Aorta (tissue), 5 donors: ENCODE measurements at regions of chr5 and their contacts with region 1.

Region 1: DNA sequence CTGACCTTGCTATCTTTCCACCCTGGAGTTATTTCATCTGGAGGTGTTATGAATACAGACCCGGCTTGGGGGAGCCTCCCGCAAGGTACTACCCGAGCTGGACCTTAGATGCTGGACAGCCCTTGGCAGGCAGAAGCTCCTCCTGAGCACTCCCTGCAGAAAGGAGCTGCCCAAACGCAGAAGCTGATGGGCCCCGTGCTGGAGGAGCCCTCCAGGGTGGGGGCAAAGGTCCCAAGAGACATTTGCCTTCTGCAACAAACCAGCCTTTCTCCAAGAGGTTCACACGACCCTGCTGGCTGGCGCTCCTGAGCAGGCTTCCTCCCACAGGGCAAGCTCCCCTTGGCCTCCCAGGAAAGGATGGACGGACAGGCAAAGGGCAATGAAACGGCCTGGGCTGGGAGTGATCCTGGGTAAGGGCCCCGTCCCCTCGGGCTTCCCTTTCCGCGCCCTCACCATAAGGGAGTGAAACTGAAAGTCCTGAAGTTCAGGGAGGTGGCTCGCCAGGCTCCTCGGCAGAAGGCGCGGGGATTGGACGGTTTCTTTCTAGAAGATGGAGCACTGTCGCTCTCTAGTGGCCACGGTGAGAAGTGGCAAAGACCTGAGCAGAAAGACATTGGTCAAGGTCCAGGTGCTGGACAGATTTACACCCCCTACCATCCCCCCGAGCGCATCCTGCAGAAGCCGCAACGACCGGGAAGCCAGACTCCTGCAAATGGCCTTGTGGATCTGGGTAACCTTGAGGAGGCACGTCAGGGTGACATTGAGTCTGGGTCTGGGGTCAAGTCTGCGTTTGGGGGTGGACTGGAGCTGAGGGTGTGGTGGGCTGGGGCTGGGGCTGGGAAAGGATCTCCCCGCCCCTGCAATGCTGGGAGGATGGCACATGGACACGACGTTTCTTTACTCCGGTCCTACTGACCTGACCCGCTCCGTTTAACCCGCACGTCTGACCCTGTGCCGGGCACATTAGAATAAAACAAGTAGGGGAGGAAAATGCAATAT is 56.4 kb downstream of the NEURL1B start:
- DNase-seq: peak; percentile 94
- ATAC-seq: peak; percentile 93
- H3K4me3 ChIP-seq: peak overlapping the region in 1 of 2 donors; percentile 56
- H3K27ac ChIP-seq: no peak overlapping the region
- H3K4me1 ChIP-seq: no peaks in the 10 kb centered on the region
- H3K27me3 ChIP-seq: no peaks in the 10 kb centered on the region

Region 2: DNA sequence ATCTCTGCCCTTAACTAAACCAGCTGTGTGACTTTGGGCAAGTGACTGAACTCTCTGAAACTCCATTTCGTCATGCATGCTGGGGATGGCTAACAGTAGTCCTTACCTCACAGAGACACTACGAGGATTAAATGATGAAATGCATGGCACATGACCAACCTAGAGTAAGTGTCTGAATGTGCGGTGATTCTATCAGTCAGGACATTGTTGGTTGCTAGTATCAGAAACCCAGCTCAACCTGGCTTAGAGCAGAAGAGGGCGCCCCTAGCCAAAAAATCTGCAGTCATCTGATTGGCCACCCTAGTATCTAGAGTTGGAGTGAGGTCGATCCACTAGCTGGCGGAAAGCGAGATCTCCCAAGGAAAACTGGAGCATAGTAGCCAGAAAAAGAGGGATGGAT is 31.2 kb before region 1 on chr5:
- intact Hi-C with region 1: loop called (anchors 2 kb)
- DNase-seq: peak in 1 of 2 donors; percentile 68
- ATAC-seq: peak; percentile 67
- H3K4me3 ChIP-seq: no peak overlapping the region
- H3K27ac ChIP-seq: no peak overlapping the region
- H3K4me1 ChIP-seq: no peaks in the 10 kb centered on the region
- H3K27me3 ChIP-seq: no peaks in the 10 kb centered on the region

Region 3: DNA sequence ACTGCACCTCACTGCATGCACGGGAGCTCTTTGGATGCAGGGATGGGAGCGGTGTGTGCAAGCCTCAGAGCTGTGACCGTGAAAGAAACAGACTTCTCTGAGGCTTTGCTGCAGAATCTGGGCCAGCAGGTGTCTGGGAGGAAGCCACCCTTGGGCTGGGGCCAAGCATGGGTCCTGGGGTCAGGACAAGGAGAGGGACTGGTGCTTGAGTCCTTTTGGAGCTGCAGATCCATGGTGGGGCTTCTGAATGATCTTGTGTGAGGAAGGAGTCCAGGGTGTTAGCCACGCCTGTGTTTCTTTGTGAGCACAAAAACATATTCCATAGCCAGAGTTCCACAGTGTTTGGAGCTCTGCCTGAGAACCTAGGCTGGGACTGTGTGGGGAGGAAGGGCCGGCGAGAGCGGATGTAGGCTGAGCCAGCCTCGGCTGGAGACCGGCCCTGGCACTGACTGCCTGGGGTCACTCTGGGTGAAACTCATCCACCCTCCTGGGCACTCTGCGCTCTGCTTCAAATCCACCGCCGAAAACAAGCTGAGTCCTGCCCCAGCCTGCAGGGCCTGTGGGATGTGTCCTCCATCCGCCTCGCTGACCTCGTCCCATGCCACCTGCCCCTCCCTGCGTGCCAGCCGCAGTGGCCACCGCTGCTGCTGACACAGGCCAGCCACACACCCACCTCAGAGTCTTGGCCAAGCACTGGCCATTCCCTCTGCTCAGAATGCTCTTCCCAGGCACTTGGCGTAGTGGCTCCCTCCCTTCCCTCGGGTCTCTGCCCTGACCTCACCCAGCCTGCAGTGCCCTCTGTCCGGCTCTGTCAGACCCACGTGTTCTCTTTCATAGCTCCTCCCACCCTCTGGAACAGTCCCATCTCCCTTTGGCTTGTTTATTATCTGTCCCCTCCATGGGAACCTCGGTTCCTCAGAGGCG is 163.4 kb after region 1 on chr5:
- intact Hi-C with region 1: no loop called
- DNase-seq: peak; percentile 93 to 95
- ATAC-seq: peak; percentile 95
- H3K4me3 ChIP-seq: no peak overlapping the region
- H3K27ac ChIP-seq: peak overlapping the region; percentile 79 to 99
- H3K4me1 ChIP-seq: peaks cover 0 to 8% of the 10 kb centered on the region in 2 donors
- H3K27me3 ChIP-seq: no peaks in the 10 kb centered on the region